ENCODE measurements at regions of chr3 and their contacts with region 1.

Region 1: GRCh38 chr3:189967254-189967865 is 153.3 kb downstream of the P3H2 start:
- DNase-seq: peak; percentile 37 to 59
- H3K4me3 ChIP-seq: no peak overlapping the region
- H3K27ac ChIP-seq: no peak overlapping the region
- H3K4me1 ChIP-seq: no peaks in the 10 kb centered on the region
- H3K27me3 ChIP-seq: no peaks in the 10 kb centered on the region
- CTCF ChIP-seq: peak; percentile 98

Region 2: GRCh38 chr3:190012314-190012782 is 45.0 kb after region 1 on chr3:
- CTCF ChIA-PET with region 1: no interaction called
- POLR2A ChIA-PET with region 1: interaction called, 19 read pairs
- intact Hi-C with region 1: loop called (anchors 1 kb)
- DNase-seq: peak; percentile 20 to 91
- H3K4me3 ChIP-seq: peak overlapping the region; percentile 25; the same call in 1 of the 2 replicates
- H3K27ac ChIP-seq: peak overlapping the region; percentile 74
- H3K4me1 ChIP-seq: peaks cover 45% of the 10 kb centered on the region
- H3K27me3 ChIP-seq: no peaks in the 10 kb centered on the region
- CTCF ChIP-seq: no peak

Region 3: GRCh38 chr3:190017521-190018288 is 50.3 kb after region 1 on chr3:
- CTCF ChIA-PET with region 1: no interaction called
- POLR2A ChIA-PET with region 1: no interaction called
- intact Hi-C with region 1: loop called (anchors 1 kb)
- DNase-seq: peak; percentile 55 to 65
- H3K4me3 ChIP-seq: no peak overlapping the region
- H3K27ac ChIP-seq: no peak overlapping the region
- H3K4me1 ChIP-seq: peaks cover 24% of the 10 kb centered on the region
- H3K27me3 ChIP-seq: no peaks in the 10 kb centered on the region
- CTCF ChIP-seq: peak; percentile 49; the same call in 1 of the 2 replicates

Region 4: DNA sequence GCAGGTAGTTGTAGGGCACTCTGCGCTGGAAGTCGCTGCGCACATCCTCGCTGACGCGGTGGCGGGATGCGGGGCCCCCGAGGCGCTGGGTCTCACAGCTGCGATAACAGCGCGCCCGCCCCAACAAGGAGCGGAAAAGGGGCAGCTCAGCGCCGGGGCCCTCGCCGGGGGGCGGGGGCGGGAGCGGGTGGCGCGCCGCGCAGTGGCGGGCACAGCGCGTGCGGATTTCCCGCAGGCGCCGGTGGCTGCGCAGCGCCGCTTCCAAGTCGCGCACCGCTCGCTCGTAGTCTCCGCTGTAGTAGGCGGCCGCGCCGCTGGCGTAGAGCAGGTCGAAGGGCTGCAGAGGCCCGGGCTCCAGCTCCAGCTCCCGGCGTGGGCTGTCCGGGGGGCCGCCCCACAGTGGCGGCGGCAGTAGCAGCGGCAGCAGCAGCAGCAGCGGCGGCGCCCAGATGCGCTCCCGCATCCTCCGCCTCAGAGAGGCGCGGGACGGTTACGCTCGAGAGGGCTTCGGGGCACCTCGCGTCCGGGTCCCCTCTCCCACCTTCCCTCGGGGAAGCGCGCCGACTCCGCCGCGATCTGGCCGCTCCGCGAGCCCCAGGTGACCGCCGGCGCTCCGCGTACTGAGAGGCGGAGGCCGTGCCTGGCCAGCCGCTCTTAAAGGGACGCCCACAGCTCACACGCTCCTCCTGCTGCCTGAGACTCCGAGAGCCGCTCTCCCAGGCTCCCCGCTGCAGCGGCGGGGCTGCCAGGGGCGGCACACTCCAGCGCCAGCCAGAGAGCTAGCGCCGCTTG is 153.1 kb after region 1 on chr3 and contains the start of gene P3H2:
- CTCF ChIA-PET with region 1: interaction called, 4 read pairs
- POLR2A ChIA-PET with region 1: no interaction called
- intact Hi-C with region 1: loop called (anchors 2 kb)
- DNase-seq: peak; percentile 84 to 91
- H3K4me3 ChIP-seq: peak within 1 kb of the TSS; percentile 90
- H3K27ac ChIP-seq: no peak within 1 kb of the TSS
- H3K4me1 ChIP-seq: peaks cover 42% of the 10 kb centered on the region
- H3K27me3 ChIP-seq: no peaks in the 10 kb centered on the region
- CTCF ChIP-seq: peak; percentile 55; the same call in 1 of the 2 replicates
- total RNA-seq, gene P3H2: 20.9 and 26.2 TPM in 2 replicates

Region 5: GRCh38 chr3:190205739-190206138 is 238.4 kb after region 1 on chr3:
- CTCF ChIA-PET with region 1: interaction called, 15 read pairs
- POLR2A ChIA-PET with region 1: no interaction called
- intact Hi-C with region 1: loop called (anchors 1 kb)
- DNase-seq: no peak
- H3K4me3 ChIP-seq: no peak overlapping the region
- H3K27ac ChIP-seq: no peak overlapping the region
- H3K4me1 ChIP-seq: peaks cover 4% of the 10 kb centered on the region; the same call in 1 of the 2 replicates
- H3K27me3 ChIP-seq: no peaks in the 10 kb centered on the region
- CTCF ChIP-seq: no peak

Region 6: DNA sequence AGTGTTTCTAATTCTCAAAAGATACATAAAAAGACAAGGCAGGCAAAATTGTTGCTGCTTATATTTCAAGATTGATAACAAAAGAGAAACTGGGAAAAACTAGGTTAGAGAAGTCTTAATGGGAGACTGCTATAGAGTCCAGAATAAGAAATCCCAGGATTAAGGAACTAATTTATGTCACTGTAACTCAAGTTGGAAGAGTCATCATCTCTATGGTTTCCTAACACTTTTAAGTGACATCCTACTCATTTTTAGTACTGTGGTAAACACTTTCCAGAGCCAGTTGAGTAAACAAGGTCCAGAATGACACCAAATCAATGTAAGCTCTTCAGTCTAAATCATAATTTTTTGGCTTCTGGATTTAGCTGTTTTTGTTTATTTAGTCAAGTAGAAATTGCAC is 428.6 kb after region 1 on chr3:
- CTCF ChIA-PET with region 1: interaction called, 10 read pairs
- POLR2A ChIA-PET with region 1: no interaction called
- intact Hi-C with region 1: no loop called
- DNase-seq: no peak
- H3K4me3 ChIP-seq: no peak overlapping the region
- H3K27ac ChIP-seq: no peak overlapping the region
- H3K4me1 ChIP-seq: no peaks in the 10 kb centered on the region
- H3K27me3 ChIP-seq: no peaks in the 10 kb centered on the region
- CTCF ChIP-seq: no peak

Region 7: DNA sequence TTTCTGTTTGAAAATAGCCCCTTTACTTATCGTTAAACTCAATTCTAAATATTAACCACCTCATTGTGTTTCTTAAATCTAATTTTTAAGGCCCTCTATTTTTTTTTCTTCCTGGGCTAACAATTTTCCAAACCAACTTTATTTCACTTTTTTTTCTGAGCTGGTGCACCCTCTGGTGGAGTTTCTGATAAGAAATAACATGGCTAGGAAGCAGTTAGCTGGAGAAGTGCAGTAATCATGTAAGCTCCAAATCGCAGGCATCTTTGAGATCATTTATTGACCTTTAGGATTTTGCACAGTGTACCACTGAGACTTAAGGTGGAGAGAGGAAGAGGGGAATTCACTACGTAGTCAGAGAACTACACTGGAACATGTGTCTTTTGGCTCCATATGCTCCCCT is 475.9 kb after region 1 on chr3:
- CTCF ChIA-PET with region 1: interaction called, 6 read pairs
- POLR2A ChIA-PET with region 1: no interaction called
- intact Hi-C with region 1: loop called (anchors 5 kb)
- DNase-seq: no peak
- H3K4me3 ChIP-seq: no peak overlapping the region
- H3K27ac ChIP-seq: no peak overlapping the region
- H3K4me1 ChIP-seq: peaks cover 17% of the 10 kb centered on the region
- H3K27me3 ChIP-seq: no peaks in the 10 kb centered on the region
- CTCF ChIP-seq: peak; percentile 72